Esophagus muscularis mucosa (tissue), 4 donors: ENCODE measurements at regions of chr20 and their contacts with region 1.

Region 1: GRCh38 chr20:38645980-38646858 is 44.6 kb downstream of the ARHGAP40 start:
- DNase-seq: peak; percentile 93
- H3K4me3 ChIP-seq: peak overlapping the region; percentile 18 to 47 (median 31)
- H3K27ac ChIP-seq: no peak overlapping the region
- H3K4me1 ChIP-seq: peaks cover 10 to 11% (median 10%) of the 10 kb centered on the region in 4 donors
- H3K27me3 ChIP-seq: peaks cover 3 to 97% (median 18%) of the 10 kb centered on the region in 4 donors
- CTCF ChIP-seq: peak; percentile 92 to 94 (median 92)
- EP300 ChIP-seq: no peak
- POLR2A ChIP-seq: no peak

Region 2: DNA sequence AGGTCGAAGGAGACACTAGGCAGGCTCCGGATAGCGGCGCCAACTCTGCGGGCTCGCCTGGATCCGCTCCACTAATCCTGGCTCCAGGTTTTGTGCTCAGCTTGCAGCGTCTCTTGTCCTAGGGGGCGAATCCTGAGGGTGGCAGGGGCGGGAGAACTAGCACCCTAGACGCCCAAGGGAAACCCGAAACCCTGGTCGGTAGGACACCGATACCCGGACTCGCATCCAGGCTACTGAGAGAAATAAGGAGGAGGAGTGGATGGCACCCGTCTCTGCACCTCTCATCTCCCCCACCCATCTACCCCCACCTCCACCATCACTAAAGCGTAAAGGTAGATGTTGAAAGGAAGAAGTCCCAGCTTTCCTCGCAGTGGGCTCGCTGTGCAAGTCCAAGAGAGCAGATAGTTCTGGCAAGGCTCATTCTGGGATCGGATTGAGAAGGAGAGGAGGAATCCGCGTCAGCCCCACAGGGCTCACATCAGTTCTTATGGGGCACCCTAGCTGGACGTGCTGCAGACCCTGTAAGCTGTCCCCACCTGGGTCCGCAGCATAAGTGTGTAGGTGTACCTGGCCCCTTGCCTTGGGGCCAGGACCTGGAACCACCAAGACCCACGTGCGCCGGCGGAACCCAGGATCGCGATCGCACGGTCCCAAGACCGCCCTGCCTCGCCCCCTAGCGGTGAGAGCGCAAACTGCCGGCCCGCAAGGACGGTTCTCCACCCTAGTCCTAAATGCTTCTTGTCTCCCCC is 84.9 kb after region 1 on chr20:
- intact Hi-C with region 1: loop called (anchors 5 kb)
- DNase-seq: no peak
- H3K4me3 ChIP-seq: peak overlapping the region; percentile 34 to 49 (median 39)
- H3K27ac ChIP-seq: no peak overlapping the region
- H3K4me1 ChIP-seq: peaks cover 23 to 53% (median 42%) of the 10 kb centered on the region in 4 donors
- H3K27me3 ChIP-seq: peaks cover 0 to 96% (median 60%) of the 10 kb centered on the region in 4 donors
- CTCF ChIP-seq: peak in 2 of 3 experiments; percentile 86 to 96
- EP300 ChIP-seq: no peak
- POLR2A ChIP-seq: no peak

Region 3: GRCh38 chr20:38751360-38751976 is 105.2 kb after region 1 on chr20:
- intact Hi-C with region 1: loop called (anchors 2 kb)
- DNase-seq: no peak
- H3K4me3 ChIP-seq: no peak overlapping the region
- H3K27ac ChIP-seq: no peak overlapping the region
- H3K4me1 ChIP-seq: peaks cover 11 to 26% (median 17%) of the 10 kb centered on the region in 4 donors
- H3K27me3 ChIP-seq: no peaks in the 10 kb centered on the region
- CTCF ChIP-seq: peak; percentile 56 to 61 (median 61)
- EP300 ChIP-seq: no peak
- POLR2A ChIP-seq: no peak

Region 4: GRCh38 chr20:38893565-38894090 is 247.4 kb after region 1 on chr20:
- intact Hi-C with region 1: loop called (anchors 5 kb)
- DNase-seq: no peak
- H3K4me3 ChIP-seq: peak overlapping the region in 2 of 4 donors; percentile 9 to 10
- H3K27ac ChIP-seq: no peak overlapping the region
- H3K4me1 ChIP-seq: peaks cover 5 to 13% (median 12%) of the 10 kb centered on the region in 4 donors
- H3K27me3 ChIP-seq: peaks cover 0 to 48% (median 2%) of the 10 kb centered on the region in 4 donors
- CTCF ChIP-seq: peak; percentile 64 to 96 (median 79)
- EP300 ChIP-seq: no peak
- POLR2A ChIP-seq: no peak

Region 5: GRCh38 chr20:39214828-39215227 is 568.6 kb after region 1 on chr20:
- intact Hi-C with region 1: no loop called
- DNase-seq: no peak
- H3K4me3 ChIP-seq: no peak overlapping the region
- H3K27ac ChIP-seq: no peak overlapping the region
- H3K4me1 ChIP-seq: no peaks in the 10 kb centered on the region
- H3K27me3 ChIP-seq: no peaks in the 10 kb centered on the region
- CTCF ChIP-seq: no peak
- EP300 ChIP-seq: no peak
- POLR2A ChIP-seq: no peak